ENCODE measurements at regions of chr4 and their contacts with region 1.

Region 1: DNA sequence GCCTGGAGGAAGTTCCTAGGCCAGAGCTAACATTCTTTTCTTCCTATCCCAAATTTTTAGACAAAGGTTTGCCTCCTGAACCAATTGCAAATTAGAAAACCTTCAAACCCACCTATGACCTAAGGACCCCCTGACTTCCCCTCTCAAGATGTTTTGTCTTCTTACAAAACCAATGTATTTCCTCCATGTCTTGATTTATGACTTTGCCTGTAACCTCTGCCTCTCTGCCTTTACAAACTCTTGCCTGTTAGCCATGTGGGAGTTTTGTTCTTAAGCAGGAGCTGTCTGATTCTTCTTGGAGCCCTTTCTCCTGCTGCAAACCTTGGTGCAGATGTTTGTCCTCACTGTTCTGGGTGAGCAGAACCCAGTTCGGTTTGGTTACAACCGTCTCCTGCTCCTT is 222.3 kb upstream of the BOD1L1 start:
- DNase-seq: no peak
- ATAC-seq: no peak
- H3K4me3 ChIP-seq: no peak overlapping the region
- H3K27ac ChIP-seq: no peak overlapping the region
- H3K4me1 ChIP-seq: no peaks in the 10 kb centered on the region
- H3K27me3 ChIP-seq: no peaks in the 10 kb centered on the region
- CTCF ChIP-seq: no peak

Region 2: GRCh38 chr4:12924253-12924652 is 925.5 kb before region 1 on chr4:
- CTCF ChIA-PET with region 1: no interaction called
- POLR2A ChIA-PET with region 1: interaction called, 13 read pairs
- in situ Hi-C with region 1: no loop called
- intact Hi-C with region 1: no loop called
- DNase-seq: no peak
- ATAC-seq: no peak
- H3K4me3 ChIP-seq: no peak overlapping the region
- H3K27ac ChIP-seq: no peak overlapping the region
- H3K4me1 ChIP-seq: no peaks in the 10 kb centered on the region
- H3K27me3 ChIP-seq: no peaks in the 10 kb centered on the region
- CTCF ChIP-seq: no peak

Region 3: GRCh38 chr4:13313856-13314255 is 535.9 kb before region 1 on chr4:
- CTCF ChIA-PET with region 1: no interaction called
- POLR2A ChIA-PET with region 1: no interaction called
- in situ Hi-C with region 1: no loop called
- intact Hi-C with region 1: no loop called
- DNase-seq: no peak
- ATAC-seq: no peak
- H3K4me3 ChIP-seq: no peak overlapping the region
- H3K27ac ChIP-seq: no peak overlapping the region
- H3K4me1 ChIP-seq: no peaks in the 10 kb centered on the region
- H3K27me3 ChIP-seq: no peaks in the 10 kb centered on the region
- CTCF ChIP-seq: no peak

Region 4: DNA sequence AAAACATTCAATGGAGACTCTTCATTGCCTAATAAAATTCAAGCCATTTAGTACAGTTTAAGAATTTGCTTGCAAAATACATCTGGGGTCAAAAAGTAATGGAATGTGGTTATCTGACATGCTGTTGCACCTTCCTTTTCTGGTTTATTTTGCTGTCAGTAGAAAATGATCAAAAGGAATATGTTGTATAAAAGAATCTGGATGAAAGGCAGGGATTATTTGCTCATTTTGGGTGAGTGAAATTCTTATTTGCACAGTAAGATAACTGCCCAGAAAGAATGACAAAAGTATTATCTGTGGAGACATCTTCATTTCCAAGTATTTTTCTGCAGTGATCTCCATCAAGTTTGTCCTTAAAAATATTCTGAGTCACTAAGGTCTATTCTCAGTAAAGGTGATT is 252.6 kb before region 1 on chr4:
- CTCF ChIA-PET with region 1: no interaction called
- POLR2A ChIA-PET with region 1: no interaction called
- in situ Hi-C with region 1: no loop called
- intact Hi-C with region 1: no loop called
- DNase-seq: no peak
- ATAC-seq: no peak
- H3K4me3 ChIP-seq: no peak overlapping the region
- H3K27ac ChIP-seq: no peak overlapping the region
- H3K4me1 ChIP-seq: no peaks in the 10 kb centered on the region
- H3K27me3 ChIP-seq: no peaks in the 10 kb centered on the region
- CTCF ChIP-seq: no peak